K562 (cell line): ENCODE measurements at regions of chr11 and their contacts with region 1.

Region 1: DNA sequence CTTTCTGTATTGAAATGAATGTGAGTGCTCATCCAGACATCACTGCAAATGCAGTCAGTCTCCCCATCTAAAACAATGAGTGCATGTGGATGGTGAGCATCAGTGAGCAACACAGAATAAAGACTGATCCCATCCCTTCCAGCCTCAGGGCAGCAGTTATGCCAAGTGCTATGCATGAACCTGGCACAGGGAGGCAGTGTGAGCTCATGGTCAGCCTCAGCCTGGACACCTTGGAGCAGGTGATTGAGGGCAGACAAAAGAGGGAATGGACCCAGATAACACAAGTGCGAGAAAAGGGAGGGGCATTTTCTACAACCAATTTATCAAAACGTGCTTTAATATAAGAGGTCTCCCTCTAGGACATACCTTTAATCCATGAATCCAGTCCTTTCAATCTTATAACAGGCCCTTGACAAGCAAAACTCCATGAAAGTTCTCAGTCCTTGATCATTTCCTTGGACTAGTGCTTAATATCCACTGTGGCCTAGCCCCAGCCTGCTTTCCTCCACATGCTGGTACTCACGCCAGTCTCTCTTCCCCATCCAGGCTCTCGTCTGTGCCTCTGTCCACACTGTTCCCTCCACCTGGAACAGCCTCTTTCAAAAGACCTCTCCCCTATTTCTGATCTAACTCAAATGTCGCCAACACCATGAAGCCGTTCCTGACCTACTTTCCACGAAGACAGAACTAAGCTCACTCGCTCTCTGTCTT is 50.5 kb upstream of the LRRC55 start:
- DNase-seq: peak; percentile 24 to 68 (median 32)
- ATAC-seq: peak; percentile 81
- H3K4me3 ChIP-seq: no peak overlapping the region
- H3K27ac ChIP-seq: no peak overlapping the region
- H3K4me1 ChIP-seq: peaks cover 0 to 16% of the 10 kb centered on the region in 2 experiments; a peak in 3 of 5 replicates
- H3K27me3 ChIP-seq: no peaks in the 10 kb centered on the region
- CTCF ChIP-seq: peak; percentile 80 to 87 (median 87)
- EP300 ChIP-seq: no peak
- POLR2A ChIP-seq: no peak
- RAD21 ChIP-seq: peak; percentile 92

Region 2: GRCh38 chr11:57240757-57241156 is 109.5 kb after region 1 on chr11:
- CTCF ChIA-PET with region 1: no interaction called
- POLR2A ChIA-PET with region 1: interaction called, 3 read pairs
- in situ Hi-C with region 1: loop called (anchors 5 kb)
- intact Hi-C with region 1: no loop called
- DNase-seq: no peak
- ATAC-seq: no peak
- H3K4me3 ChIP-seq: no peak overlapping the region
- H3K27ac ChIP-seq: no peak overlapping the region; the same call in 2 of the 3 replicates
- H3K4me1 ChIP-seq: peaks cover 43 to 70% of the 10 kb centered on the region in 2 experiments
- H3K27me3 ChIP-seq: no peaks in the 10 kb centered on the region
- CTCF ChIP-seq: no peak
- EP300 ChIP-seq: no peak
- POLR2A ChIP-seq: no peak
- RAD21 ChIP-seq: no peak